Ascending aorta (tissue), 2 donors: ENCODE measurements at regions of chr16 and their contacts with region 1.

Region 1: GRCh38 chr16:2474877-2475412 is at the start of gene TBC1D24:
- DNase-seq: peak; percentile 44 to 89
- H3K4me3 ChIP-seq: peak within 1 kb of the TSS; percentile 68 to 76
- H3K27ac ChIP-seq: peak within 1 kb of the TSS; percentile 52 to 79
- H3K4me1 ChIP-seq: peaks cover 21 to 26% of the 10 kb centered on the region in 2 donors
- H3K27me3 ChIP-seq: peaks cover 12% of the 10 kb centered on the region
- CTCF ChIP-seq: no peak
- total RNA-seq, gene TBC1D24: 22.5 TPM

Region 2: DNA sequence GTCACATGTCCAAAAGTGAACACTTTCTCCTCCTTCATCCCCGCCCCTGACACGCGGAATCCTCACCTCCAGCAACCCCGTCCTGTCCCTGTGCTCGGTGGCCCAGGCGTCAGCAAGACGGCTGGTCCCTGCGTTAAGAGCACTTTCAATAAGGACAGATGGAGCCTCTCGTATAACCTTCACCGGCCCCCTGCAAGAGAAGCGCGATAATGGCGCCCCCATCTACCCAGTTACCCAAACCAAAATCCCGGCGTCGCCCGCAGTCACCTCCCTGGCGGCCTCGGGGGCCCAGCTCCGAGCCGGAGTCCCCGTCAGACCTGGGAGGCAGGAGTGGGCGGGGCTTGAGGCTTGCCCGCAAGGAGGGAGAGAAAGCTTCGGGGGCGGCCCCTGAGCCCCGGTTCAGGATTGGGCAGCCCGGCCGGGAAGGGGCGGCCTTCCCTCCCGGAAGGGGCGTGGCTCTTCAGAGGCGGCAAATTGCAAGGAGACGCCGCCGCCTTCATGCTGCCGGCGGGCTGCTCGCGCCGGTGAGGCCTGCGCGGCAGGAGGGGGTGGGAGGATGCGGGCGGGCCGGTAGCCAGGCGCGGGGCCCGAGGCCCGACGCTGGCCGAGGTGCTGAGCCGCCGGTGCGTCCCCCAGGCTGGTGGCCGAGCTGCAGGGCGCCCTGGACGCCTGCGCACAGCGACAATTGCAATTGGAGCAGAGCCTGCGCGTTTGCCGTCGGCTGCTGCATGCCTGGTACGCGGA is 15.1 kb before region 1 on chr16 and contains the start of gene TEDC2:
- intact Hi-C with region 1: loop called (anchors 1 kb)
- DNase-seq: peak; percentile 79 to 98
- H3K4me3 ChIP-seq: peak within 1 kb of the TSS; percentile 61 to 67
- H3K27ac ChIP-seq: no peak within 1 kb of the TSS
- H3K4me1 ChIP-seq: peaks cover 0 to 8% of the 10 kb centered on the region in 2 donors
- H3K27me3 ChIP-seq: no peaks in the 10 kb centered on the region
- CTCF ChIP-seq: no peak
- total RNA-seq, gene TEDC2: not detected

Region 3: GRCh38 chr16:2500918-2501750 is 26.2 kb after region 1 on chr16:
- intact Hi-C with region 1: loop called (anchors 1 kb)
- DNase-seq: peak in 1 of 2 donors; percentile 89
- H3K4me3 ChIP-seq: peak overlapping the region in 1 of 2 donors; percentile 38
- H3K27ac ChIP-seq: no peak overlapping the region
- H3K4me1 ChIP-seq: peaks cover 12 to 30% of the 10 kb centered on the region in 2 donors
- H3K27me3 ChIP-seq: no peaks in the 10 kb centered on the region
- CTCF ChIP-seq: peak; percentile 94 to 99 (median 98)